ENCODE measurements at regions of chr15 and their contacts with region 1.

Region 1: DNA sequence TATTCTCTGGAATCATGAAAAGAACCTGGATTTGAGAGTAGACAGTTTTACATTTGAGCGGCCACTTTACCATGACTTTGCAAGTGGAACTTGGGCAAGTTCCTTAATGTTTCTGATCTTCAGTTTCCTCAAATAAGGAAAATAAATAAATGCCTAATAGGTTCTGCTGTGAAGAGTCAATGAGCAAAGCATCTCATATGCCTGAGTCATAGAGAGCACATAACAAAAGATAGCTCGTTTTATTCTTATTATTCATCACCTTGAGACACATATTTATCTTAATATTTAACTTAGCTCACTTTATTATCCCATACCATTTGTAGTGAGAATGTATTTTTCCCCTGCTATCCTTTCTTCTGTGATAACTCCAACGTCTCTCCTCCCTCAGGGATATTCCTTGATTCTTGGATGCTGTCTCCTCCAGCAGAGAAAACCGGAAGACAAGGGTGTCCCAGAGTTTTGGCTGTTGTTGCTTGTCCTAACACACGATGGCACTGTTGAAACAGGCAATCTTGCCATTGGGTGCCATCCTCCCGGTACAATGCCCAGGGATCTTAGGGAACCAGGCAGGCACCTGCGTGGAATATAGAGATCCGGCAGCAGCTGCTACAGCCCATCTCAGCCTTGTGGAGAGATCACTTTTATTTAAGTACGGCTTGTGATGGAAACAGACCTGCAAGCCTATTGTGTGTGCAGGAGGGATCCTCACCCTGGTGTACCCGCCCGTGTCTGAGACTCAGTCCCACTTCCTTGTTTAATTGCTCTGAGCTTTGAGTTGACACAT is 33.3 kb upstream of the VPS33B start:
- DNase-seq: no peak
- H3K4me3 Mint-ChIP-seq: no peak overlapping the region
- H3K27ac Mint-ChIP-seq: no peak overlapping the region
- H3K4me1 Mint-ChIP-seq: no peaks in the 10 kb centered on the region
- H3K27me3 Mint-ChIP-seq: peaks cover 61% of the 10 kb centered on the region

Region 2: GRCh38 chr15:90165659-90166421 is 889.9 kb before region 1 on chr15:
- intact Hi-C with region 1: no loop called
- DNase-seq: peak; percentile 21
- H3K4me3 Mint-ChIP-seq: peak overlapping the region; percentile 40
- H3K27ac Mint-ChIP-seq: peak overlapping the region; percentile 62
- H3K4me1 Mint-ChIP-seq: peaks cover 21% of the 10 kb centered on the region
- H3K27me3 Mint-ChIP-seq: no peaks in the 10 kb centered on the region

Region 3: GRCh38 chr15:90931737-90932659 is 123.7 kb before region 1 on chr15 and contains the start of gene HDDC3:
- intact Hi-C with region 1: no loop called
- DNase-seq: peak; percentile 87
- H3K4me3 Mint-ChIP-seq: peak within 1 kb of the TSS; percentile 99
- H3K27ac Mint-ChIP-seq: peak within 1 kb of the TSS; percentile 99
- H3K4me1 Mint-ChIP-seq: peaks cover 69% of the 10 kb centered on the region
- H3K27me3 Mint-ChIP-seq: no peaks in the 10 kb centered on the region
- total RNA-seq, gene HDDC3: 38.8 and 39.0 TPM in 2 replicates

Region 4: DNA sequence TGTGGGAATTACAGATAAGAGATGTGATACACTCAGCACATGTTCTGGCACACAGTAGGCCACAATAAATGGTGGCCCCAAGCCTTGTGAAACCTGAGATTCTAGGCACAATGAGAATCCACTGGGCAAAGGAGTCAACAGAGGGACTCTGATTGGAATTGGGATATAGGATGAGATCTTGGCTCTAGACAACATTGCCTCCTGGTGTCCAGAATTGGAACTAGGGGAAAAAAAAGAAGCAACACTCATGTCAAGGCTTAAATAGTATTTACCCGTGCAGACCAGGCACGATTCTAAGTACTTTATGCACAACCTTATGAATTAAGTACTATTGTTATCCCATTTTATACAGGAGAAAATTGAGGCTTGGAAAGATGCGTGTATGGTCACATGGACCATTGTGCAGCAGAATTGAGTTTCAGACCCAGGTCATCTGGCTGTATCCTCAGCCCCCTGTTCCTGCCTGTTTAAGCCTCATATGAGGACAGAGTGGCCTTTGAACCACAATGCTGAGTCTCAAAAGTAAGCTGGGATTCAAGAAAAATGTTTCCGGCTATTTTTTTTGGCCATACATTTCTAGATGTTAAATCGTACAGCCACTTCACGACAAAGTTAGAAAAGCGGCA is 169.1 kb after region 1 on chr15:
- intact Hi-C with region 1: loop called (anchors 1 kb)
- DNase-seq: no peak
- H3K4me3 Mint-ChIP-seq: no peak overlapping the region
- H3K27ac Mint-ChIP-seq: no peak overlapping the region
- H3K4me1 Mint-ChIP-seq: no peaks in the 10 kb centered on the region
- H3K27me3 Mint-ChIP-seq: peaks cover 8% of the 10 kb centered on the region

Region 5: GRCh38 chr15:91246998-91247397 is 191.3 kb after region 1 on chr15:
- intact Hi-C with region 1: loop called (anchors 1 kb)
- DNase-seq: no peak
- H3K4me3 Mint-ChIP-seq: no peak overlapping the region
- H3K27ac Mint-ChIP-seq: no peak overlapping the region
- H3K4me1 Mint-ChIP-seq: no peaks in the 10 kb centered on the region
- H3K27me3 Mint-ChIP-seq: peaks cover 15% of the 10 kb centered on the region

Region 6: GRCh38 chr15:91271565-91272153 is 215.9 kb after region 1 on chr15:
- intact Hi-C with region 1: loop called (anchors 1 kb)
- DNase-seq: peak; percentile 38
- H3K4me3 Mint-ChIP-seq: peak overlapping the region; percentile 38
- H3K27ac Mint-ChIP-seq: no peak overlapping the region
- H3K4me1 Mint-ChIP-seq: peaks cover 9% of the 10 kb centered on the region
- H3K27me3 Mint-ChIP-seq: peaks cover 33% of the 10 kb centered on the region